ENCODE measurements at regions of chr7 and their contacts with region 1.

Region 1: DNA sequence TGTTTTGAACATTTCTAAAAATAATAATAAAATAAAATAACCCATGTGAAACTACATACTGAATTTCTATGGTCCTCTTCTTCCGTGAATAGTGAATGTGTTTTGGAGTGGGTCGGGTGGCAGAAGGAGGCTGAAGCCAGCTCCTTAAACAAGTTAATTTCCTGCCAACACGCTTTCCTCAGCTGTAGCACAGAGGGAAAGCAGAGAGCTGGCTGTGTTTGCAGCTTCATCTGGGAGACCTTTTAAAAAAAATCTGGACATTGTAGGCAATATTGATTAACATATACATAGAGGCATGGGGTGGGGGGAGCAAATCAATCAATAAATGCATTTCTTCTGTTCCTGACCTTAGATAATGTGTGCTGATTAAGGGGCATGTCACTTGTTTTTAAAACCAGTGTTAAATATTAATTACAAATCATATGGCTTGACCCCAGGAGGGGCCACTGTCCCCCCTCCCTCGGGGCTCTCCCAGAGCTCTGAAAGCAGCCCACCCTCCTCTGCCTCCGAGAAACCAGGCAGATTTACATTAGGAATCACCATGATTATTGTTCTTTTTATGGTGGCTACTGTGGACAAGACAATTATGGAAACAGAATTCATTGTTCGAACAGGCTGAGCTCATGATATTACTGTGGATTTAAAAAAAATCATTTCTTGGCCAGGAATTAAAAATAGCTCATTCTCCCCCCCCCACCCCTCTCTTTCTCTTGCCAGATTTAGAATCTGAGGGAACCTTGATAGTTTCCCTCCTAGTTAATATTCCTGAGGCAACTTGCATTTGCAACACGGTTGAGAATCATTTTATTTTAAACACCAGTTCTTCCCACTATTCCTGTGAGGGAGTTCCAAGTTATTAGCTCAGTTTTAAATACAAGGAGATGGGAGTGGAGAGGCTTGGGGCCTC is 100.5 kb upstream of the CARD11 start:
- DNase-seq: no peak
- H3K4me3 ChIP-seq: no peak overlapping the region
- H3K27ac ChIP-seq: no peak overlapping the region
- H3K4me1 ChIP-seq: no peaks in the 10 kb centered on the region
- H3K27me3 ChIP-seq: no peaks in the 10 kb centered on the region
- CTCF ChIP-seq: no peak
- POLR2A ChIP-seq: no peak

Region 2: DNA sequence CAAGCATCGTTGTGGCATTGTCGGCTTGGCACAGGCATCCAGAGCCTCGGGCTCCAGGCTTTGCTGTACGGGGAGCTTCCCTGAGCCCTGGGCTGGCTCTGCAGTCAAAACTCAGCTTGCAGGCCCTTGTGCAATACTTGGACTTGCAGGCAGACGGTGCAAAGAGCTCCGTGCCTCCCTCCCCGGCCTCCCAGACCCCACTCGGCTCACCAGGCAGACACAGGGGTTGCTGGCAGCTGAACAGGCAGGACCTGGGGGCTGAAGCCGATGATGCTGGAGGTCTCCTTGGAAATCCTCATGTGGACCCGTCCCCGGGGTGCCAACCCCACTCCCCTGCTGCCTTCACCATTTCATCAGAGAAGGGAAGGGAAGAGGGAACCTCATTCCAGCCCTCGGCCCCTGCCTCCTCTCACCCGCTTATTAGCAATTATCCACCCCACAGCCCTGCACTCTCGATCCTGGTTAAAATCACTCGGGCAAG is 240.4 kb before region 1 on chr7:
- intact Hi-C with region 1: no loop called
- DNase-seq: no peak
- H3K4me3 ChIP-seq: no peak overlapping the region
- H3K27ac ChIP-seq: no peak overlapping the region
- H3K4me1 ChIP-seq: no peaks in the 10 kb centered on the region
- H3K27me3 ChIP-seq: no peaks in the 10 kb centered on the region
- CTCF ChIP-seq: no peak
- POLR2A ChIP-seq: no peak

Region 3: GRCh38 chr7:3187444-3188040 is 43.4 kb after region 1 on chr7:
- intact Hi-C with region 1: no loop called
- DNase-seq: no peak
- H3K4me3 ChIP-seq: no peak overlapping the region
- H3K27ac ChIP-seq: no peak overlapping the region
- H3K4me1 ChIP-seq: no peaks in the 10 kb centered on the region
- H3K27me3 ChIP-seq: no peaks in the 10 kb centered on the region
- CTCF ChIP-seq: no peak
- POLR2A ChIP-seq: no peak

Region 4: DNA sequence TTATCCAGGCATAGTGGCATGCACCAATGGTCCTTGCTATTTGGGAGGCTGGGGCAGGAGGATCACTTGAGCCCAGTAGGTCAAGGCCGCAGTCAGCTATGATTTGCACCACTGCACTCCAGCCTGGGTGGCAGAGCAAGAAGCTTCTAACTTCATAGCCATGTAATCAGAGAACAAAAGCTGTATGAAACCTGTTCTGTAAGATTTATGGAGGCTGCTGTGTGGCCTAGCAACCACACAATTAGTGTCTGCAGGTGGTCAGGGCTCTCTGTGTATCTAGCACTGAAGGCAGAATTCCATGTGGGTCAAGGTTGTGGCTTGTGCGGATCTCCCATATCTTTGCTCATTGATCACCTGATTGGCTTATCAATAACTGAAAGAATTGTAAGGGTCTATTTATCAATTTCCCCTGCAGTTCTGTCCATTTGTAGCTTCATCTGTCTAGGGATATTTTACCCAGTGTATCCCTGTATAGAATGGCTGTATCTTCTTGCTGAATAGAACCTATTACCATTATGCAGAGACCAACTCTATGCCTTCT is 1316.5 kb after region 1 on chr7:
- intact Hi-C with region 1: loop called (anchors 5 kb)
- DNase-seq: no peak
- H3K4me3 ChIP-seq: no peak overlapping the region
- H3K27ac ChIP-seq: no peak overlapping the region
- H3K4me1 ChIP-seq: peaks cover 11% of the 10 kb centered on the region
- H3K27me3 ChIP-seq: no peaks in the 10 kb centered on the region
- CTCF ChIP-seq: no peak
- POLR2A ChIP-seq: no peak